Naive thymus-derived CD4-positive, alpha-beta T cell (primary cell): ENCODE measurements at regions of chr7 and their contacts with region 1.

Region 1: DNA sequence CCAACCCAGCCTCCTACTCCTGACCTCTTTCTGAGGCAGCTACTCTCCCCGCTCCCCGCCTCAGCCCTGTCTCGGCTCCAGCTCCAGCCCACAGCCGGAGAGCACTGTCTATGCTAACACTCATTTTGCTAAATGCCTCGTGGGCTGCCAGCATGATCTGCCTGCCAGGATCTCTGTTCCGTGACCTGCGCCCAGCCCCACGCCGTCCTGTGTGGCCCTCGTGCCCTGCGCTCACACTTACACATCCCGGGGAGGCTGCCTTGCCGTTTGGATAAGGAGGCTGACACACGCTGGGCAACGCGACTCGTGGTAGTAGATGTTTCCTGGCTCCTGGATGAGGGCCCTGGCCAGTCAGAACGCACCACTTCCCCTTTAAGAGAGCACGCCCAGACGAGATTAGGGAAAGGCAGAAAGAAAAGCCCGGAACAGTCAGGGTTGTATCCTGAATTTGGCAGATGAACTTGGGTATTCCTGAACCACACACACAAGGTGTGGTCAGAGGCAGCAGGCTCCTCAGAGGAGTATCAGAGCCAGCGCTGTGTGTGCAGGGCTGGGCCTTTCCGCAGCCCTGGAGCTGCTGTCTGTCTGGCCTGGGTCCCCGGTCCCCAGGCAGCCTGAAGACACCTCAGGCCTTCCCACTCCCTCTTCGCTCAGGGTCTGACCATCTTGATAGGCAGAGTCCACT is 97.7 kb upstream of the EFCAB10 start:
- DNase-seq: peak in 5 of 9 donors; percentile 11 to 33 (median 26)
- ATAC-seq: peak; percentile 47
- H3K4me3 ChIP-seq: peak overlapping the region; percentile 30
- H3K4me3 Mint-ChIP-seq: peak overlapping the region; percentile 76 to 97 (median 86)
- H3K27ac ChIP-seq: peak overlapping the region; percentile 59
- H3K27ac Mint-ChIP-seq: peak overlapping the region; percentile 87 to 99 (median 95)
- H3K4me1 ChIP-seq: peaks cover 41 to 43% of the 10 kb centered on the region in 2 donors
- H3K4me1 Mint-ChIP-seq: peaks cover 56 to 94% (median 86%) of the 10 kb centered on the region in 7 donors
- H3K27me3 ChIP-seq: no peaks in the 10 kb centered on the region
- H3K27me3 Mint-ChIP-seq: no peaks in the 10 kb centered on the region

Region 2: GRCh38 chr7:105638902-105639495 is 40.0 kb before region 1 on chr7:
- CTCF ChIA-PET with region 1: no interaction called
- POLR2A ChIA-PET with region 1: no interaction called
- intact Hi-C with region 1: no loop called
- DNase-seq: no peak
- ATAC-seq: no peak
- H3K4me3 ChIP-seq: no peak overlapping the region
- H3K4me3 Mint-ChIP-seq: no peak overlapping the region
- H3K27ac ChIP-seq: no peak overlapping the region
- H3K27ac Mint-ChIP-seq: no peak overlapping the region
- H3K4me1 ChIP-seq: no peaks in the 10 kb centered on the region
- H3K4me1 Mint-ChIP-seq: no peaks in the 10 kb centered on the region
- H3K27me3 ChIP-seq: no peaks in the 10 kb centered on the region
- H3K27me3 Mint-ChIP-seq: no peaks in the 10 kb centered on the region

Region 3: DNA sequence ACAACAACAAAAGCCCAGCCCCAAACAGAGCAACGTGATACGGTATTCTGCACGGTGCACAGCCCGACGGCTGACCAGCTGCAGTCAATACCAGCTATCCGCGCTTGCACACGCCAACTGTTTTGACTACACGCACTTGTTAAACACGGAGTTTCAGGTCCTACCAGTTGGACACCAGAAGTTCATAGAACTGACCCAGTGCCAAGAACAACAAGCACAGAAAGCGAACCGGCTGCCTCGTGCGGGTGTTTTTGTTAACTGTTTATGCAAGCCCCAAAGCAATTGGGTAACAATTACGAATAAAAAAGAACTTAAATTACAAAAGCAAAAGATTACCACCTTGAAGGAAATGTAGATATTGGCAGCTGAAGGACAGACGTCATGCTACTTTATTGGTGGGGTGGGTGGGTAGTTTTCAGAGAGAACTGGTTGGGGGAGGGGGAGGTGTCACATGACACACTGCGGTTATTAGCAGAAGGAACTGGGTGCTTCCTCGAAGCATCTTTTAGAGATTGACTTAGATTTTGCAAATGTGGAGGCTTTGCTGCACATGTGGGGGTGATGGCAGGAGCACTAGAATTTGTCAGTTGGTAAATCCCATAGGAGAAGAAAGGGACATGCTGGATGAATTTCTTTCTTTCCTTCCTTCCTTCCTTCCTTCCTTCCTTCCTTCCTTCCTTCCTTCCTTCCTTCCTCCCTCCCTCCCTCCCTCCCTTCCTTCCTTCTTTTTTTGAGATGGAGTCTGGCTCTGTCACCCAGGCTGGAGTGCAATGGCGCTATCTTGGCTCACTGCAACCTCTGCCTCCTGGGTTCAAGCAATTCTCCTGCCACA is 13.0 kb after region 1 on chr7:
- CTCF ChIA-PET with region 1: no interaction called
- POLR2A ChIA-PET with region 1: interaction called, 60 read pairs
- intact Hi-C with region 1: loop called (anchors 1 kb)
- DNase-seq: peak; percentile 22 to 94 (median 90)
- ATAC-seq: peak; percentile 89
- H3K4me3 ChIP-seq: peak overlapping the region; percentile 94
- H3K4me3 Mint-ChIP-seq: peak overlapping the region; percentile 84 to 98 (median 92)
- H3K27ac ChIP-seq: peak overlapping the region; percentile 83
- H3K27ac Mint-ChIP-seq: peak overlapping the region; percentile 95 to 100 (median 99)
- H3K4me1 ChIP-seq: peaks cover 19 to 21% of the 10 kb centered on the region in 2 donors
- H3K4me1 Mint-ChIP-seq: peaks cover 33 to 78% (median 65%) of the 10 kb centered on the region in 7 donors
- H3K27me3 ChIP-seq: no peaks in the 10 kb centered on the region
- H3K27me3 Mint-ChIP-seq: no peaks in the 10 kb centered on the region